BJ (cell line): ENCODE measurements at regions of chr22 and their contacts with region 1.

Region 1: GRCh38 chr22:39532215-39533071 is at the start of gene RPS19BP1:
- DNase-seq: peak; percentile 99
- H3K4me3 ChIP-seq: peak within 1 kb of the TSS; percentile 78
- H3K27me3 ChIP-seq: no peaks in the 10 kb centered on the region; the same call in 1 of the 2 replicates
- CTCF ChIP-seq: no peak
- polyA plus RNA-seq, gene RPS19BP1: 64.0 and 66.7 TPM in 2 replicates

Region 2: DNA sequence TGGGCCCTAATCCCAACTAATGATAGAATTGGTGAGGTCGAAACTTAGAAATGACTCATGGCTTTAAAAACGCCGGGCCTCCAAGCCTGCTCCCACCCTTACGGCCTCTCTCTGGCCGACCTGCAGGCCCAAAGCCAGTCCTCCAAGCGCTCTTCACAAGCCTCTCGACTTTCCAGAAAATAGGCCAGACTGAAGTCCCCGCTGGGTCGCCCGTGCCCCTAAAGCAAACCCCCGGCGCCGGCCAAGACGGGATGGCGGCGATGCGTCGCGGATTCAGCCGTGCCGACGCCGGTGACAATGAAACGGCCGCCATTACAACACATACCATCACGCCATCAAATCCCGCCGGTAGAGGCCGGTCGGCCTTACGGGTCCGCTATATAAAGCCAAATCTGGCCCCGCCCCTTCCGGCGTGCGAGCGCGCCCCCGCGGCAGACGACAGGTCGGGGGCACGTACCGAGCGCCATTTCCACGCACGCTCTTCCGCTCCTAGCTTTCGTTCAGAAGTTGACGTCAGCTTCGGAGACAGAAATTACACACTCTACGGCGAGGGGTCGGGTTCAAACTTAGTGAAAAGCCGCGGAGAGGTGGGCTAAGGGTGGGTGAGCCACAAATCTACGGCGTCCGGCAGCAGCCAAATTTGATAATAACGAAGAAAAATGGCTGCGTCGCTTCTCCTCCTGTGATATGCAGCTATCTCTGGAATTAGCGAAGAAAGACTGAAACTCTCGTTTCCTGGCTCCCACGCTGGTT is 213.0 kb before region 1 on chr22 and contains the start of gene RPL3:
- CTCF ChIA-PET with region 1: interaction called, 41 read pairs
- POLR2A ChIA-PET with region 1: interaction called, 5 read pairs
- DNase-seq: peak; percentile 89
- H3K4me3 ChIP-seq: peak within 1 kb of the TSS; percentile 87
- H3K27me3 ChIP-seq: no peaks in the 10 kb centered on the region
- CTCF ChIP-seq: peak; percentile 36; the same call in 1 of the 2 replicates
- polyA plus RNA-seq, gene RPL3: 3,985 and 4,772 TPM in 2 replicates

Region 3: DNA sequence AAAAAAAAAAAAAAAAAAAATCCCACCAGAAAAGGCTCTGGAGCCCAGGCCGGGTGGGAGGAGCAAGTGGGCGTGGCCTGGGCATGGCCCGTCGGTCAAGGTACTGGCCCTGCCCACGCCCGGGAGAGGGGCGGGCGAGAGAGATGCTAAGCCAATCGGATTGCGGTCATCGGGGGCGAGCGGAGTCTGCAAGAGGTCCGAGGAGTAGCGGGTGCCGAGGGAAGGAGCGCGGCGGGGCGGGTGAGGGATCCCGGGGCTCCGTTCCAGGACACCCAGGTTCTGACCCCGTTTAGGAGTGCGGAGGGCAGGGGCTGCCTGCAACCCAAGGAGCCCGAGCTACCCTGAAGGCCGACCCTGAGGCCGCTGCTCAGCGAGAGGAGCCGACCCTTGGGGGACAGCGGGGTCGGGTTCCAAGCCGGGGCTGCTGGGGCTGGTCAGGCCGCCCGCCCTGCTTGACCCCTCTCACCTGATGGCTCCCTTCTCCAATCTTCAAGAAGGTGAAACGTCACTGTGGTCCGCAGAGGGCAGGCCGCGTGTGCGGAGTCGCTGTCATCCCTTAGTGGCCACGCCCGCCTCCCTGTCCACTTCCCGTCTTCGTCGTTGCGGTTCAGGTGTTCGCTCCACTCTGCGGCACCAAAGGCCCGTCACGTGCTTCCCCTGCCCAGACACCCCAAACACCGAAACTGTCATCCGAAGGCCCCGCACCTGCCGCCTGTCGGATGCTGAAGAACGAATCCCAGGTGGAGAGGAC is 144.0 kb before region 1 on chr22:
- CTCF ChIA-PET with region 1: no interaction called
- POLR2A ChIA-PET with region 1: no interaction called
- DNase-seq: peak; percentile 27
- H3K4me3 ChIP-seq: peak overlapping the region; percentile 61
- H3K27me3 ChIP-seq: no peaks in the 10 kb centered on the region
- CTCF ChIP-seq: no peak

Region 4: GRCh38 chr22:39416319-39416718 is 116.1 kb before region 1 on chr22:
- CTCF ChIA-PET with region 1: interaction called, 10 read pairs
- POLR2A ChIA-PET with region 1: no interaction called
- DNase-seq: no peak
- H3K4me3 ChIP-seq: no peak overlapping the region
- H3K27me3 ChIP-seq: no peaks in the 10 kb centered on the region
- CTCF ChIP-seq: no peak

Region 5: GRCh38 chr22:39496131-39496838 is 36.2 kb before region 1 on chr22:
- CTCF ChIA-PET with region 1: interaction called, 35 read pairs
- POLR2A ChIA-PET with region 1: no interaction called
- DNase-seq: no peak
- H3K4me3 ChIP-seq: no peak overlapping the region
- H3K27me3 ChIP-seq: peaks cover 1% of the 10 kb centered on the region; the same call in 1 of the 2 replicates
- CTCF ChIP-seq: peak; percentile 86

Region 6: GRCh38 chr22:39543095-39543494 is 10.7 kb after region 1 on chr22:
- CTCF ChIA-PET with region 1: interaction called, 36 read pairs
- POLR2A ChIA-PET with region 1: no interaction called
- DNase-seq: no peak
- H3K4me3 ChIP-seq: no peak overlapping the region
- H3K27me3 ChIP-seq: peaks cover 3% of the 10 kb centered on the region; the same call in 1 of the 2 replicates
- CTCF ChIP-seq: peak; percentile 60

Region 7: GRCh38 chr22:39612811-39613548 is 80.5 kb after region 1 on chr22:
- CTCF ChIA-PET with region 1: no interaction called
- POLR2A ChIA-PET with region 1: no interaction called
- DNase-seq: no peak
- H3K4me3 ChIP-seq: no peak overlapping the region
- H3K27me3 ChIP-seq: peaks cover 2% of the 10 kb centered on the region; the same call in 1 of the 2 replicates
- CTCF ChIP-seq: no peak

Region 8: GRCh38 chr22:39960791-39961746 is 428.6 kb after region 1 on chr22:
- CTCF ChIA-PET with region 1: no interaction called
- POLR2A ChIA-PET with region 1: no interaction called
- DNase-seq: peak; percentile 53
- H3K4me3 ChIP-seq: no peak overlapping the region
- H3K27me3 ChIP-seq: peaks cover 3% of the 10 kb centered on the region; the same call in 1 of the 2 replicates
- CTCF ChIP-seq: no peak

Region 9: DNA sequence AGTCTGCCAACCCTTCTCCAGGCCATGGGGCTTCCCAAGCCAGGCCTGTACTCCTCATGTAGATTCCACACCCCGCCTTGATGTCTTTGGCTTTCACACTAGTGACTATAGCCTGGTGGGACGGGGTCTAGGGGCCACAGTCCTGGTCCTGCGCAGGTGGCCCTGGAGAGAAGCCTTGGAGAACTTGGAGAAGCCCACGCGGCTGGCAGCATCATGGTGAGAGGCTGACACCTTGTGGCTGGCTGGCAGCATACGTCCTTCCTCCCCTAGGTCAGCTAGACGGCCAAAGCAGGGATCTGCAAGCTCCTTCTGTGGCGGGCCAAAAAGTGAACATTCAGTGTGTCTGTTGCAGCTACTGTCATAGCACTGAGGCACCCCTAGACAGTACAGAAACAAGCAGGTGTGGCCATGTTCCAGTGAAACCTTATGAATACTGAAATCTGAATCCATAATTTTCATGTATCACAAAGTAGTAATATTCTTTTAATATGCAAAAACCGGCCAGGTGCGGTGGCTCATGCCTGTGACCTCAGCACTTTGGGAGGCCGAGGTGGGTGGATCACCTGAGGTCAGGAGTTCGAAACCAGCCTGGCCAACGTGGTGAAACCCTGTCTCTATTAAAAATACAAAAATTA is 504.3 kb after region 1 on chr22:
- CTCF ChIA-PET with region 1: interaction called, 476 read pairs
- POLR2A ChIA-PET with region 1: no interaction called
- DNase-seq: no peak
- H3K4me3 ChIP-seq: no peak overlapping the region
- H3K27me3 ChIP-seq: peaks cover 15% of the 10 kb centered on the region
- CTCF ChIP-seq: peak; percentile 84